Panc1 (cell line): ENCODE measurements at regions of chr1 and their contacts with region 1.

Region 1: DNA sequence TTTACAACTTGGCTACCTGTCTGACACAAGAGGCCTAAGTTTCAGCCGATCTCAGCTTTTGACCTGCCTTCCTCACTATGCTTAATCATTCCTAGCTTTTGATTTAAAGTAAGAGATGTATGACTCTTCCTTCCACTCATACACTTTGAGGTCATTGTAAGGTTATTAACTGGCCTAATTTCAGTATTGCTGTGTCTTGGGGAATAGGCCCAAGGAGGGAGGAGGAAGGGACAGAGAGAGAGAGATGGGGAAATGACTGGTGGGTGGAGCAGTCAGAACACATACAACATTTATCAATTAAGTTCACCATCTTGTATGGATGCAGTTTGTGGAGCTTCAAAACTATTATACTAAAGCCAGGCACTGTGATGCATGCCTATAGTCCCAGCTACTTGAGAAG is 28.3 kb upstream of the FAM20B start:
- DNase-seq: no peak
- ATAC-seq: no peak
- H3K4me3 ChIP-seq: no peak overlapping the region
- H3K27ac ChIP-seq: no peak overlapping the region
- H3K4me1 ChIP-seq: no peaks in the 10 kb centered on the region
- H3K27me3 ChIP-seq: no peaks in the 10 kb centered on the region
- CTCF ChIP-seq: no peak

Region 2: DNA sequence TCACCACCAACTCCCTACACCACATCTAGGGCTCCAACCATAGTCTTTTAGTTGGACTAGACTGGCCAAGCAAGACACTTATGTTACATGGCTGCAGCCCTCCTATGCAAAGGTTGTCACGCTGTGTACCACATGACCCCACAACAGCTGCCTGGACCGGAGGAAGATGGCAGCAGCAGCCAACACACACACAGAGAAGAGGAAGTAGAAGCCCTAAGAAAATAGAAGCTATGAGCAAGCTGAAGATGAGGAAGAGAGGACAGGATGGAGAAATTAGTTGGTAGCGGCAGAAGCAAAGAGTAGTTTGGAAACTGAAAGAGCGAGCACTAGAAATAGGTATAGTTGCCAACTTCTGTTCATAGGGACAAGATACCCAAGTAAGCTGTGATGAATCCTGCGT is 333.1 kb before region 1 on chr1:
- CTCF ChIA-PET with region 1: no interaction called
- POLR2A ChIA-PET with region 1: no interaction called
- in situ Hi-C with region 1: no loop called
- intact Hi-C with region 1: no loop called
- DNase-seq: no peak
- ATAC-seq: no peak
- H3K4me3 ChIP-seq: no peak overlapping the region
- H3K27ac ChIP-seq: no peak overlapping the region
- H3K4me1 ChIP-seq: no peaks in the 10 kb centered on the region
- H3K27me3 ChIP-seq: peaks cover 2% of the 10 kb centered on the region; the same call in 1 of the 2 replicates
- CTCF ChIP-seq: no peak

Region 3: DNA sequence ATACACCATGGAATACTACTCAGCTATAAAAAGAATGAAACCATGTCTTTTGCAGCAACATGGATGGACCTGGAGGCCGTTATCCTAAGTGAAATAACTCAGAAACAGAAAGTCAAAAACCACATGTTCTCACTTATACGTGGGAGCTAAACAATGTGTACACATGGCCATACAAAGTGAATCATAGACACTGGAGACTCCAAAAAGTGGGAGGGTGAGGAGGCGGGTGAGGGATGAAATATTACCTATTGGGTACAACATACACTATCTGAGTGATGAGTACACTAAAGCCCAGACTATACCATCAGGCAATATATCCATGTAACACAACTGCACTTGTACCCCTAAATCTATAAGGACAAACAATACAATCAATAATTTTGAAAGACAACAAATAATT is 11.2 kb before region 1 on chr1:
- CTCF ChIA-PET with region 1: interaction called, 14 read pairs
- POLR2A ChIA-PET with region 1: no interaction called
- in situ Hi-C with region 1: no loop called
- intact Hi-C with region 1: no loop called
- DNase-seq: no peak
- ATAC-seq: no peak
- H3K4me3 ChIP-seq: no peak overlapping the region
- H3K27ac ChIP-seq: no peak overlapping the region
- H3K4me1 ChIP-seq: no peaks in the 10 kb centered on the region
- H3K27me3 ChIP-seq: no peaks in the 10 kb centered on the region
- CTCF ChIP-seq: no peak